Tibial artery (tissue), 4 donors: ENCODE measurements at regions of chr12 and their contacts with region 1.

Region 1: DNA sequence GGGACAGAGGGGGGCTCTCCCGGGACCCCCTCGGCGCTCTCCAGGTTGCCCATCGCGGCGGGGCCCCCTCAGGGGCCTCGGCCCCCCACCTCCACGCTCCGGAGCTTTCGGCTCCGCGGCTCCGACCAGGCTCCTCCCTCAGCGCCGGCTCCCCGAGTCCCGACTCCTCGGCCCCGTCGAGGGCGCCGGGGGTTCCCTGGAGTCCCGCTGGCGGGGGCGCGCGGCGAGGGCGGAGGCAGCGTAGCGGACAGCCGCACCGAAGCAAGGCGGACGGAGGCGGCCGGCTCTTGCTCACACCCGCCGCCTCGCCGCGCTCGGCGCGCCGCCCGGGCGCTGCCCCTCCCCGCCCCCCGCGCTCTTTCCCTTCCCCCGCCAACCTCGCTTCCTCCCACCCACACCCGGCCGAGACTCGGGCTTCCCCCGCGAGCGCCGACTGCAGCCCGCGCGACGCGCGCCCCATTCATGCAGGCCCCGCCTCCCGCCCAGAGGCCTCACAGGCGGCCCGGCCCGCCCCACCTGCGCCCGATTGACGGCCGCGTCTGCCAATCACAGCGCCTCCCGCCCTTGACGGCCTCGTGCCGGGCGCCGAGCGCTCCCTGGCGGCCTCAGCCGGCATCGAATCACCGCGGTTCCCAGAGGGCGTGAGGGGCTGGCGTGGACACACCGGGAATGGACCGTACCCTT is at the start of gene FMNL3:
- DNase-seq: peak; percentile 97 to 99
- H3K4me3 ChIP-seq: peak within 1 kb of the TSS; percentile 83 to 97
- H3K27ac ChIP-seq: peak within 1 kb of the TSS; percentile 94 to 97
- H3K4me1 ChIP-seq: peaks cover 0 to 37% (median 24%) of the 10 kb centered on the region in 4 donors
- H3K27me3 ChIP-seq: no peaks in the 10 kb centered on the region
- CTCF ChIP-seq: peak; percentile 93 to 100

Region 2: DNA sequence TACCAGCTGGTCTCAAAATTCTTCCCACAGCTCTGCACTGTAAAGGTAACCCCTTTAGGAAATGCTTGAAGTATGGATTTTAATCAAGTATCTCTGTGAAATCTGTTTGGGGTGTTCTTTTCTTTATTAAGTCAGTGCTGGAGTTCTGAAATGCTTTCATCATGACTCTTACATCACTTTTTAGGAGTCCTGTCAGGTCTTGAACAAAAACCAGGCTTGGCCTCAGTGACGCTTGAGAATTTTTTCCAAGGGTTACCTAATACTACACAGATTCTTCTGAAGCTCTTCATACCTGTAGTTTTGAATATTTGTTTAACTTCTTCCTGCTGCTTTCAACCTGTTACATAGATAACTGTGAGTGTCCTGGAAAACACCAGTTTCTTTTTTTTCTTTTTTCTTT is 215.4 kb before region 1 on chr12:
- intact Hi-C with region 1: no loop called
- DNase-seq: no peak
- H3K4me3 ChIP-seq: no peak overlapping the region
- H3K27ac ChIP-seq: no peak overlapping the region
- H3K4me1 ChIP-seq: no peaks in the 10 kb centered on the region
- H3K27me3 ChIP-seq: no peaks in the 10 kb centered on the region
- CTCF ChIP-seq: no peak

Region 3: DNA sequence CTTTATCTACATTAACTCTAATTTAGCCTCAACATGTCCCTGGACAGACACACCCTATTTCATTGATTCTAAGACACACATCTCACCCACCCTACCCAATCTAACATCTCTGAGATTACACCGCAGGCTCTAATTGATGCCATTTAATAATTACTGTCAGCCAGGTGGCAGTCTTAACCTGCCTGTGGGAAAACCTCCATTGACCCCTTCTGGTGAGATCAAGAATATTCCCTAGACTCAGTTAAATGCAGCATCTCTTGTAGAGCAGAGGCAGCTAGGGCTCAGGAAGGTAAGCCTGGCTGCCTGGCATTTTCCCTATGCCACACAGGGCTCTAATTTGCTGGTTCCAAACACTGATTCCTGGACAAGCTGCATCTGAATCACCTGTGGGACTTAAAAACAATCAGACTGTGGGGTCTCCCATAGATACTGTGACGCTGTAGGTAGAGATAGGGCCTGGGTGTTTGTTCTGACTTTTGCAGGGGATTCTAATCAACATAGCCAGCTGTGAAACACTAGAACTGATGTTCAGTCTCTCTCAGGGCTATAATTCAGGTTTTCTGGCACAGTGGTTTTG is 153.7 kb before region 1 on chr12:
- intact Hi-C with region 1: no loop called
- DNase-seq: no peak
- H3K4me3 ChIP-seq: no peak overlapping the region
- H3K27ac ChIP-seq: no peak overlapping the region
- H3K4me1 ChIP-seq: peaks cover 0 to 19% (median 13%) of the 10 kb centered on the region in 4 donors
- H3K27me3 ChIP-seq: peaks cover 0 to 14% of the 10 kb centered on the region in 2 donors
- CTCF ChIP-seq: no peak

Region 4: DNA sequence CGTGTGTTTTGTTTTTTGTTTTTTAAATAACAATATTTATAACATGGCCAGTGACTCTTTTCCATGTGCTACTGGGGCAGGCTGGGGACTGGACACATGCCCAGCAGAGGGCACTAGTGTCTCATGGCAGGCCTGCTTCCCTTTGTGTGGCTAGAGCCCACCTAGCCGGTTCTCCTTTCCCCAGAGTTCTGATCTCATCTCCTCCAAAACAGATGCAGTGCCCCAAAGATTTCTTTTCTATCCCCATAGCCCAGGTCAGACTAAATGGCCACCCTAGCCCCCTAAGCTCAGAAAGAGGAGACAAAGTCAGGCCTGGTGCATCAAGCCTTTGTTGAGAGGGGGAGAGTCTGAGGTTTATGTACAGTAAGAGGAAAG is 62.7 kb before region 1 on chr12:
- intact Hi-C with region 1: loop called (anchors 1 kb)
- DNase-seq: peak; percentile 81 to 86
- H3K4me3 ChIP-seq: no peak overlapping the region
- H3K27ac ChIP-seq: no peak overlapping the region
- H3K4me1 ChIP-seq: peaks cover 0 to 22% (median 15%) of the 10 kb centered on the region in 4 donors
- H3K27me3 ChIP-seq: no peaks in the 10 kb centered on the region
- CTCF ChIP-seq: peak; percentile 96

Region 5: GRCh38 chr12:49673446-49674317 is 33.6 kb before region 1 on chr12:
- intact Hi-C with region 1: loop called (anchors 5 kb)
- DNase-seq: peak; percentile 95 to 97
- H3K4me3 ChIP-seq: no peak overlapping the region
- H3K27ac ChIP-seq: peak overlapping the region; percentile 82 to 97
- H3K4me1 ChIP-seq: peaks cover 0 to 55% (median 50%) of the 10 kb centered on the region in 4 donors
- H3K27me3 ChIP-seq: no peaks in the 10 kb centered on the region
- CTCF ChIP-seq: peak; percentile 57 to 77